Posterior vena cava (tissue), 2 donors: ENCODE measurements at regions of chr4 and their contacts with region 1.

Region 1: DNA sequence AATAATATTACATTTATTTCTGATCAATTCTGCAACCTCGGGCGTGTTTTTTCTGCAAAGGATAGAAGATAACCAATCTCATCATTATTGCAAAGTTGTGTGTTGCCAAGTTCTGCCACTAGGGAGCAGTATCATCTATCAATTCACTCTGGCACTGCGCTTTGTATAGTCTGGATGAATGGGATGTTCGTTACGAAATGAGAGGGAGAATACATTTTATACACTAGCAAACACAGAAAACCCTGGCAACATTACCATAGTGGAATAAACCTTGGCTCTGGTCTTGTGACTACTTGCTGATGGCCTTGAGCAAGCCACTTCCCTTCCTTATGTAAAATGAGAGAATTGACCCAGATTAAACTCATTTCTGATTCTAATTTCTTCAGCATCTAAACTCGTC is 97.5 kb upstream of the ZNF518B start:
- DNase-seq: no peak

Region 2: GRCh38 chr4:10157478-10158332 is 397.0 kb before region 1 on chr4:
- intact Hi-C with region 1: loop called (anchors 1 to 5 kb)
- DNase-seq: no peak

Region 3: DNA sequence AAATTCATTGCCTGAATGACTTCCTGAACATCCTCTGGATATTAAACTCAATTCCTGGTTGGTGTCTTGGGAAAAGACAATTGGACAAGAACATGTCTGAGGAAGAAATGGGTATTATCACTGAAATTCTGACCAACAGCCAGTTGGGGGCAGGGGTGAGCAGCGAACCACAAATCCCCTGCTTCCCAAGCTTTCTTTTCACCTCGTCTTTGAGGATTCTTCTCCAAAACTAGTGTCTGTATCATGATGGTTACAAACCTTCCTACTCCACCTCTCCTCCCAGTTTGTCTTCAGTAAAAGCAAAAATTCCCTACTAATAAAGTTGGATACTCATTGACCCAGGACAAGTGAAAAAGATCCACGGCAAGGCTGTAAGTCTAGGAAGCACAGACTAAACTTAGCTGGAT is 389.8 kb before region 1 on chr4:
- intact Hi-C with region 1: loop called (anchors 1 to 5 kb)
- DNase-seq: no peak

Region 4: DNA sequence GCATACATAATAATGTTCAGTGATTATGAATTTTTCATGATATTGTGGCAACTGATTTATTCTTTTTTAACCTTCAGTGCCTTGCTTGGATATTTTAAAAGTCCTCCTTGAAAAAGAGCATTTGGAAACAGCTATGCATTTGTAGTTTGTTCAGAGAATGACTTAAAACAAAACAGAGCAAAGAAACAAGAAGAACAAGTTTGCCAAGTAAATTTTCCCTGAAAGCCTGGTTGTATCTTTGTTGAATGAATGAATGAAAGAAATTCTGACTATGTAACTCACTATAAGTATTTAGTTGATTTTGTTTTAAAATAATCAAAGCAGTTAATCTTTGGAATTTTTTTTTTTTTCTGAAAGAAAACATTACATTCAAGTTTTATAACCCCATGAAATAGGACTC is 37.0 kb before region 1 on chr4:
- intact Hi-C with region 1: no loop called
- DNase-seq: no peak

Region 5: DNA sequence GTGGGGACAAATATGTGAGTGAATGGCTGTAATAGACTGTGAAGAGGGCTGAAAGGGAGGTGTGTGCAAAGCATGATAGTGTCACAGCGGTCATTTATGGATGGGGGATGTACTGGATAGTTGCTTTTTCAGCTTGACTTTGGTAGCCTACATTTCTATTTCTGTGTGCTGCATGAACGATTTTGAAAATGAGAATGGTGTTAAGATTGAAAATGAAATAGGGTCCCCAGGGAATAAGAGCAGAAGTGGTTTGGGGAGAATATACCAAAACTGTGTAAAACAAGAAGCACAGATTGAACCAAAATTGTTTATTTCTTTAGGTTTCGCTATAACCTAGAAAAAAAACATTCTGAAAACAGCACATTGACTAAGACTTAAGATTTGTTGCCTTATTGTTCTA is 188.7 kb after region 1 on chr4:
- intact Hi-C with region 1: no loop called
- DNase-seq: no peak

Region 6: DNA sequence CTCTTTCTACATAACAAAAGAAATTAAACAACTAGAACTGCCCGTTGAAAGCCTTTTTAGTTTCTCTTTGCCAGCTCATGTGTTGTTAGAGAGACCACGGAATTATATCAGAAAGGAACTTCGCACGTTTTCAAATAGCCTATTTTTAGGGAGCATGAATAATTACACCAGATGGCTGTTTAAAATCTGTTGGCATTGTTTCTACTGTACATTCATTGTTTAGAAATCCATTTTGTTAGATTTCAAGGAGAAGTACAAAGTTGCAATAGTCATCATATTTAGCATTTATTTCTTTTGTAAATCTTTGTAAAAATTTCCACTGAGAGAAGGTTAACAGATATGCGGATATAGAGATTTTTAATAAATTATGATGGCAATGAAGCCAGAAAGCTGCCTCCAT is 1277.0 kb after region 1 on chr4:
- intact Hi-C with region 1: loop called in 1 of 2 experiments (anchors 5 kb)
- DNase-seq: no peak